ENCODE measurements at regions of chr5 and their contacts with region 1.

Region 1: GRCh38 chr5:59007460-59008063 is 424.7 kb downstream of the RAB3C start:
- ATAC-seq: peak in 1 of 8 experiments; percentile 41
- H3K4me3 ChIP-seq: no peak overlapping the region
- H3K27ac ChIP-seq: no peak overlapping the region
- H3K4me1 ChIP-seq: peaks cover 0 to 8% of the 10 kb centered on the region in 2 donors

Region 2: DNA sequence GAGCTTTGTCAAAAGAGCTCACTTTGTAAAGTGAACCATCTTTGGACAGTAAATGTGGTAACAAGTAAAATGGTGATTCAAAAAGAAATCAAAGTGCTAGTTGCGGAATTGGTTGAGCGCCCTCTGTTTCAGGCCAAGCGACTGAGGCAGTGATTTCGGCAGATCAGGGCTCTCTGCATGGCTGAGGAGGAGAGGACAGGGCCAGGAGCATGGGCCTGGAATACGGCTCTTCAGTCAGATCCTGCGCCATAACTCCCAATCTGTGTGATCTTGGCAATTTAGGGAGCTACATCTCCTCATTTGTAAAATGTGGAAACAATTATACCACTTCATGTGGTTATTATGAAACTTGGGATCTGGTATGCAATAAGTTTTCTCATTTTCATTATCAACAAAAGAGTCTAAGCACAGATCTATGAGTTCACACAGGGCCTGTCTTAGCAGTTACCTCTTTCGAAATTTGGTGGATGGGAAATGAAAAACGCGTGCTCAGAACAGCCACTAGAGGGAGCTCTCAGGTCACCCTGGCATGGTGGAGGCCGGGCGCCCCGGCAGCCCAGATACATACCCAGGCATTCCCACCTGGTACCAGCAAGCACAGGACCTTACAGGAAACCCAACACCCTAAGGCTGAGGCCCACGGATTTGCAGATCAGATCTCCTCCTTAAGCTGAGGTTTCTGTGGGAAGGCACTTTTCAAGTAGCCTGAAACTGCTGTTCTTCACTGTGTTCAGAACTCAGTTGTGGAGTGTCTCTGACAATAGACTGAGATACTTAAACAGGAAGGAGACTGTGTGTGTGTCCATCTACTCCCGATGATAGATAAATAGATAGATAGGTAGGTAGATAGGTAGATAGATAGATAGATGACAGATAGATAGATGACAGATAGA is 121.0 kb before region 1 on chr5:
- in situ Hi-C with region 1: loop called in 3 of 9 experiments (anchors 10 to 25 kb)
- ATAC-seq: peak; percentile 27 to 88 (median 50)
- H3K4me3 ChIP-seq: no peak overlapping the region
- H3K27ac ChIP-seq: no peak overlapping the region
- H3K4me1 ChIP-seq: peaks cover 13 to 14% of the 10 kb centered on the region in 2 donors

Region 3: GRCh38 chr5:58922461-58923171 is 84.9 kb before region 1 on chr5:
- in situ Hi-C with region 1: loop called in 1 of 9 experiments (anchors 25 kb)
- ATAC-seq: peak in 1 of 8 experiments; percentile 69
- H3K4me3 ChIP-seq: no peak overlapping the region
- H3K27ac ChIP-seq: no peak overlapping the region
- H3K4me1 ChIP-seq: peaks cover 5 to 18% of the 10 kb centered on the region in 2 donors